Activated B cell treated with CpG ODN at 0.5 μM for 24 hours (primary cell): ENCODE measurements at regions of chr12 and their contacts with region 1.

Region 1: DNA sequence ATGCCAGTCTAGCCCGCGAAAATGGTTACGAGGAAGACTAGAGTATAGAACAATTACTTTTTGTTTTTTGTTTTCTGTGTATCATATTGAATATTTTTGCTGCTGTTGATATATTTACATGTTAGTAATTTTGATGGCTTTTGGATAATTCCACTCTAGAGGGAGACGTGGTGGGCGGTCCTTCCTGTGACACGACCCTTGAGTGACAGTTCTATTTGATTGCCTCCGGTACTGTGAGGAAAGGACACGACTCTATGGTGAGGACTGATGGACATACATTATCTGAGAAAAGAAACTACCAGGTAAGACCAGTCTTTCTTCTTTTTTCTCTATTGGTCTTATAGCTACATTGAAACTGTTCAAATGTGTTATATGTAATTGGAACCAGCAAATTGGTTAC is 34.7 kb downstream of the CNOT2 start:
- DNase-seq: no peak
- ATAC-seq: no peak
- H3K4me3 Mint-ChIP-seq: no peak overlapping the region
- H3K27ac Mint-ChIP-seq: no peak overlapping the region
- H3K4me1 Mint-ChIP-seq: peaks cover 28% of the 10 kb centered on the region
- H3K27me3 Mint-ChIP-seq: no peaks in the 10 kb centered on the region
- CTCF ChIP-seq: no peak

Region 2: GRCh38 chr12:70260646-70261045 is 17.3 kb before region 1 on chr12:
- CTCF ChIA-PET with region 1: no interaction called
- POLR2A ChIA-PET with region 1: no interaction called
- intact Hi-C with region 1: loop called (anchors 2 kb)
- DNase-seq: no peak
- ATAC-seq: peak; percentile 54
- H3K4me3 Mint-ChIP-seq: peak overlapping the region; percentile 53
- H3K27ac Mint-ChIP-seq: peak overlapping the region; percentile 77
- H3K4me1 Mint-ChIP-seq: peaks cover 65% of the 10 kb centered on the region
- H3K27me3 Mint-ChIP-seq: no peaks in the 10 kb centered on the region
- CTCF ChIP-seq: no peak

Region 3: GRCh38 chr12:70317781-70318180 is 39.8 kb after region 1 on chr12:
- CTCF ChIA-PET with region 1: no interaction called
- POLR2A ChIA-PET with region 1: no interaction called
- intact Hi-C with region 1: loop called (anchors 5 kb)
- DNase-seq: no peak
- ATAC-seq: peak; percentile 21
- H3K4me3 Mint-ChIP-seq: no peak overlapping the region
- H3K27ac Mint-ChIP-seq: no peak overlapping the region
- H3K4me1 Mint-ChIP-seq: peaks cover 33% of the 10 kb centered on the region
- H3K27me3 Mint-ChIP-seq: no peaks in the 10 kb centered on the region
- CTCF ChIP-seq: no peak